Posterior cingulate gyrus (tissue), 11 donors: ENCODE measurements at regions of chr5 and their contacts with region 1.

Region 1: DNA sequence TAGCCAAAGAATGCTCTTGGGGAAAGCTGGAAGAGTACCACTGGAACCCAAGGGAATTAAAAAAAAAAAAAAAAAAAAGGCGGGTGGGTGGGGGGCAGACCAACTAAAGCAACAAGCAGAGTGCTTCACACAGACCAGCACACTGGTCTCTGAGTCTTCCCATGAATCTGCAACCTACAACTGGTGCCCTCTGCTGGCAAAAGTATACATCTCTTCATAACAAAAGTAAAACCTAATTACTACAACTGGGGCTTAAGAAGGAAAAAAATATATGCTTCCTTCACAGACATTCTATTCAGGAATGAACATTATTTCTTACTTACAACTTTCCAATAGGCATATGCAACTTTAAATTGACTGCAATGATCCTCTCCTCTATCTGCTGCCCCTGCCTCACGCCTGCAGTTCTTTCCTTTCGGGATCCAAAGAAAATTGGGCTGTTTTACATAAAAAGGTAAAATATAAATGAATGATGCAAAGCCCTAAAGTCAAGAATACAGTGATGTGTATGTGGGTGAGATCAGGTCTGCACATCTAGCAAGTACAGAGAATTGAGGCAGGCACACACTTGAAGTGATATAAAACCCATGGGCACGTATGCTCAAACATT is 7.2 kb upstream of the KLHL3 start:
- DNase-seq: peak in 5 of 10 donors; percentile 31 to 83 (median 41)

Region 2: DNA sequence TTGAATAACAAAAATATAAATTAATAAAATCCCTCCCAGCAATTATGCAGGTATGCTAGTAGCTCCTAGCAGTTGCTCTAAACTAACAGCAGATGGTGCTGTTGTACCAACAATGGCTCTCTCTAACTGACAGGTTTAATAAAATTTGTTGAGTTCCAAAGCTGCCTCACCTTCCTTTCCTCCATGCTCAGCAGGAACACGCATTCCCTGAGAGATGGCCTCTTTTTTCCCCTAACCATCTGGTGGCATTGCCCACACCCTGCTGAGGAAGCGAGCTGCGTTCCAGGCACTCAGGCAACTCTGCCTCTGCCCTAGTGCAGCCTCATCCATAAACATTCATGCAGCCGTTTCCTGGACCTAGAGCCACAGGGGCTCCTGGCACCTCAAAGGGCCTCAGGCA is 113.5 kb before region 1 on chr5:
- intact Hi-C with region 1: loop called (anchors 1 kb)
- DNase-seq: peak in 4 of 10 donors; percentile 47 to 87 (median 70)

Region 3: DNA sequence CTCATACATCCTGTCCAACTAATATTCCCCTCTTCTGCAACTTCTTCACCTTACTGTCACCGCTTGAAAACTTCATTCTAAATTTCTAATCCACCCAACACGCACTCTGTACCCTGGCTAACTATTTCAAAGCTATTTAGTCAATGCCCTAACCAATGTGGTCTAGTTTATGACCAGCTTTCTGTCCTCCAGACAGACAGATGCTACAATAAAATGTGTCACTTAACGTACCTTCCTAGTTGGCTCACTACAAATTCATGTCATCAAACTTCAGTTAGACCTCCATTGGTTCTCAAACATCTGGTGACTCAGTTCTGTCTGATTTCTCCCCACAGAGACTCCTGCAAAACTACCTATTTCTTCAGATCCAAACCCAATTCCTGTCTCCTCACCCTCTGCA is 232.1 kb after region 1 on chr5:
- intact Hi-C with region 1: no loop called
- DNase-seq: no peak